Activated CD4-positive, alpha-beta T cell treated with anti-CD3 and anti-CD28 coated beads, Interleukin-2, amount 10 ng/mL, durations not matched to agents 7 days and 5 days (primary cell): ENCODE measurements at regions of chr2 and their contacts with region 1.

Region 1: GRCh38 chr2:241702132-241703031 is 543 bp downstream of the ING5 start:
- DNase-seq: peak; percentile 85
- H3K4me3 Mint-ChIP-seq: peak overlapping the region; percentile 83
- H3K27ac Mint-ChIP-seq: peak overlapping the region; percentile 72
- H3K4me1 Mint-ChIP-seq: peaks cover 25% of the 10 kb centered on the region
- H3K27me3 Mint-ChIP-seq: no peaks in the 10 kb centered on the region

Region 2: GRCh38 chr2:241686649-241687425 is 15.5 kb before region 1 on chr2 and contains the start of gene DTYMK:
- CTCF ChIA-PET with region 1: interaction called, 37 read pairs
- POLR2A ChIA-PET with region 1: interaction called, 4 read pairs
- DNase-seq: peak; percentile 96
- H3K4me3 Mint-ChIP-seq: peak within 1 kb of the TSS; percentile 93
- H3K27ac Mint-ChIP-seq: peak within 1 kb of the TSS; percentile 94
- H3K4me1 Mint-ChIP-seq: peaks cover 36% of the 10 kb centered on the region
- H3K27me3 Mint-ChIP-seq: no peaks in the 10 kb centered on the region
- total RNA-seq, gene DTYMK: 79.7 to 87.0 TPM

Region 3: DNA sequence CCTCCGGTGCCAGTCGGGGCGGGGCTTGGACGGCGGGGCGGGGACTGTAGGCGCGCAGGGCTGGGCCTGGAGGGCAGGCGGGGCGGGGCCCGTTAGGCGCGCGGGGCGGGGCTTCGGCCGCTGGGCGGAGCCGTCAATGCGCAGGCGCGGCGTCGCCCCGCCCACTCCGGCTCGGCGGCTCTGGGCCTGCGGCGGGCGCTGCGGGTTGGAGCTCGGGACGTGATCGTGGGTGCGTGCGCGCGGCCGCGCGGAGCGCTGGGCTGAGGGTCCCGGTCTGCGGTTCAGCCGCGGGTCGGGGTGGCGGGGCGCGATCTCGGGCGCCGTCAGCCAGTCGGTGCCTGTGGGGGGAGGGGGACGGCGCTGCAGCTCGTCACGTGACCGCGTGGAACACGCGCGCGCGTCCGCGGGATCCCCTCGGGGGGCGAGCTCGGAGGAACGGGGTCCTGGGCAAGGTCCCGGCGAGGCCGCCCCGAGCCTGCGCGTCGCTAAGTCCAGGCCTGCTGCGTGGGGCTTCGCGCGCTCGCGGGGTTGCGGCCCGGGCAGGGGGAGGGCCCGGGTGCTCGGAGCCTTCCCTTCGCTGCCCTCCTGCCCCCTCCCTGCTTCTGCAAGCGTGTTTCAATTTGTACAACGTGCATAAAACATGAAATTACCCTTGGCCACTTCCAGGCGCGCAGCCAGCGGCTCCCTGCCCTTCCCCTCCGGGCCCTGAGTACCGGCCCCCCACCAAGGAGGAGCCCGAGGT is 32.3 kb after region 1 on chr2 and contains the start of gene D2HGDH:
- CTCF ChIA-PET with region 1: interaction called, 10 read pairs
- POLR2A ChIA-PET with region 1: interaction called, 3 read pairs
- DNase-seq: peak; percentile 93
- H3K4me3 Mint-ChIP-seq: peak within 1 kb of the TSS; percentile 79
- H3K27ac Mint-ChIP-seq: peak within 1 kb of the TSS; percentile 85
- H3K4me1 Mint-ChIP-seq: peaks cover 59% of the 10 kb centered on the region
- H3K27me3 Mint-ChIP-seq: no peaks in the 10 kb centered on the region
- total RNA-seq, gene D2HGDH: 18.5 to 29.2 TPM

Region 4: GRCh38 chr2:241877989-241878970 is 175.9 kb after region 1 on chr2:
- CTCF ChIA-PET with region 1: interaction called, 22 read pairs
- POLR2A ChIA-PET with region 1: no interaction called
- DNase-seq: peak; percentile 78
- H3K4me3 Mint-ChIP-seq: no peak overlapping the region
- H3K27ac Mint-ChIP-seq: no peak overlapping the region
- H3K4me1 Mint-ChIP-seq: peaks cover 34% of the 10 kb centered on the region
- H3K27me3 Mint-ChIP-seq: peaks cover 2% of the 10 kb centered on the region